ENCODE measurements at regions of chr5 and their contacts with region 1.

Region 1: DNA sequence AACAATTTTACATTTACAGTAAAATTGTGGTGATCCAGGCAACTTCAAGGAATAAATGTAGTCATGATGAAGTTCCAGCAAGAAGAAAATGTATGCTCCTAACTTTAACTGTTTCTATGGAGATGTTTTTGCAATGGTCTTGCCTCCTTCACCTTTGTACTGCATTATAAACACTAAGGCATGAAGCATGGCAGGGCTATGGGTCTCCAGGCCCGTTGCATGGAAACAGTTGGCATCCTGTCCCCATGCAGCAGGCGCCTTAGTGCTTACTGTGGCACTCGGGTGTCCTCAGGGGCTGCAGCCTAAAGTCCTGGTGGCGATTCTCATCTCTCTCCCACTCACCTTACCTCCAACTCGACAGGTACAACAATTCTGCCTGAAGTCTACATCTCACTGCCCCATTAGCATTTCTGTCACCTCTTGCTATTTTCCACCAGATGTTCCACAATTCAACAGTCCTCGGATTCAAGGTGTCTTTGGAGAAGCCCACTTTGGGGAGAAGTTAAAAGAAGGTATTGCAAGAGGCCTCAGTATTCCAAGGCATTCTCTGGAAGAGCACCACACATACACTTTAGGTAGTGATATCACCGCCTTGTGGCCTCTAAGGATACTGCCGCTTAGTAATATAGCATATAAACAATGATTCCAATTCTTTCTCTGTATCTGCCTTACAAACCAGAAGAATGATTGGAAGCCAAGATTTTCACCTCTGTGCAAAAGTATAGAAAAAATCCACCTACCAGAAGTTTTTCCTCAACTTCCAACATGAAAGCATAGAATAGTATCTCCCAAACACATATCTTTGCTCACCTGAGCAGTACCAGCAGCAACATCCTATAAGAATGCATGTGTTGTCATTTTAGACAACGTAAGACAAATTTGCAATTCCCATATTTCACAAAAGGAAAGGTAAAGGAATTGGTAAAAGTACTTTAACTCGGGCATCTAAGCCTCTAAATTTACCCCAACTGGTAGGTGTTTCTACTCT is 5.1 kb downstream of the LIFR start:
- DNase-seq: no peak
- ATAC-seq: no peak
- H3K4me3 ChIP-seq: no peak overlapping the region
- H3K27ac ChIP-seq: no peak overlapping the region
- H3K4me1 ChIP-seq: peaks cover 6 to 16% of the 10 kb centered on the region in 2 donors
- H3K27me3 ChIP-seq: no peaks in the 10 kb centered on the region

Region 2: GRCh38 chr5:38598994-38599611 is 47.8 kb after region 1 on chr5:
- intact Hi-C with region 1: loop called in 1 of 2 experiments (anchors 5 kb)
- DNase-seq: no peak
- ATAC-seq: peak; percentile 34
- H3K4me3 ChIP-seq: no peak overlapping the region
- H3K27ac ChIP-seq: no peak overlapping the region
- H3K4me1 ChIP-seq: peaks cover 0 to 4% of the 10 kb centered on the region in 2 donors
- H3K27me3 ChIP-seq: no peaks in the 10 kb centered on the region